ENCODE measurements at regions of chr3 and their contacts with region 1.

Region 1: GRCh38 chr3:148718982-148719862 is 21.5 kb downstream of the AGTR1 start:
- DNase-seq: no peak
- H3K4me3 ChIP-seq: no peak overlapping the region
- H3K4me3 Mint-ChIP-seq: no peak overlapping the region
- H3K27ac Mint-ChIP-seq: no peak overlapping the region
- H3K4me1 ChIP-seq: no peaks in the 10 kb centered on the region
- H3K4me1 Mint-ChIP-seq: no peaks in the 10 kb centered on the region
- H3K27me3 ChIP-seq: no peaks in the 10 kb centered on the region
- H3K27me3 Mint-ChIP-seq: no peaks in the 10 kb centered on the region
- CTCF ChIP-seq: peak; percentile 36 to 62

Region 2: GRCh38 chr3:148450819-148451218 is 268.4 kb before region 1 on chr3:
- CTCF ChIA-PET with region 1: no interaction called
- POLR2A ChIA-PET with region 1: no interaction called
- intact Hi-C with region 1: no loop called
- DNase-seq: peak in 1 of 2 experiments; percentile 29
- H3K4me3 ChIP-seq: no peak overlapping the region
- H3K4me3 Mint-ChIP-seq: no peak overlapping the region
- H3K27ac Mint-ChIP-seq: no peak overlapping the region
- H3K4me1 ChIP-seq: peaks cover 10% of the 10 kb centered on the region
- H3K4me1 Mint-ChIP-seq: peaks cover 16% of the 10 kb centered on the region
- H3K27me3 ChIP-seq: no peaks in the 10 kb centered on the region
- H3K27me3 Mint-ChIP-seq: no peaks in the 10 kb centered on the region
- CTCF ChIP-seq: no peak

Region 3: DNA sequence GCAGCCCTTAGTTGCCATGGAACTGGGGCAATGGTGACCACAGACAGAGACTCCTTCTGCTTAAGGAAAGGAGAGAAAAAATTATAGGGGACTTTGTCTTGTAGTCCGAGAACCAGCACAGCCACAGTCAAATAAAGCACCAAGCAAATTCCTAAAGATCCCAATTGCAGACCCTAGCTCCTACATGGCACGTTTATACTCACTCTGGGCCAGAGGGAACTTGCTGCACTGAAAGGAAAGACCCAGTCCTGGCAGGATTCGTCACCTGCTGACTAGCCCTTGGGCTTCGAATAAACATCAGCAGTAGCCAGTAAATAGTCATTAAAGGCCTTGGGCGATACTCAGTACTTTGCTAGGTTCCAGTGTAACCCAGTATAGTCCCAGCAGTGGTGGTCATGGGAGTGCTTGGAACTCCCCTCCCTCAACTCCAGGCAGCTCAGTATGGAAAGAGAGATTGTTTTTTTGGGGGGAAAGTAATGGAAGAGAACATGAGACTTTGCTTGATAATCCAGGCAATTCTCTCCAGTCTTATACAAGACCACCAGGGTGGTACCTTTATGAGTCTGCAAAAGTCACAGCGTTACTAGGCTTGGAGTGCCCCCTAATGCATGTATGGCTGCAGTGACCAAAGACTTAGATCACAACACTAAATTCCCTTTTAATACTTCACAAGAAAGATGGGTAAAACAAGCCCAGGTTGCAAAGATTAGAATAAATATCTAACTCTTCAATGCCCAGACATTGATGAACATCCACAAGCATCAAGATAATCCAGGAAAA is 87.9 kb before region 1 on chr3:
- CTCF ChIA-PET with region 1: no interaction called
- POLR2A ChIA-PET with region 1: no interaction called
- intact Hi-C with region 1: loop called (anchors 2 kb)
- DNase-seq: peak in 1 of 2 experiments; percentile 41
- H3K4me3 ChIP-seq: no peak overlapping the region
- H3K4me3 Mint-ChIP-seq: no peak overlapping the region
- H3K27ac Mint-ChIP-seq: no peak overlapping the region
- H3K4me1 ChIP-seq: peaks cover 7% of the 10 kb centered on the region; the same call in 1 of the 2 replicates
- H3K4me1 Mint-ChIP-seq: peaks cover 7% of the 10 kb centered on the region
- H3K27me3 ChIP-seq: no peaks in the 10 kb centered on the region
- H3K27me3 Mint-ChIP-seq: no peaks in the 10 kb centered on the region
- CTCF ChIP-seq: peak; percentile 57 to 58

Region 4: GRCh38 chr3:148757238-148758215 is 38.3 kb after region 1 on chr3:
- CTCF ChIA-PET with region 1: no interaction called
- POLR2A ChIA-PET with region 1: no interaction called
- intact Hi-C with region 1: no loop called
- DNase-seq: no peak
- H3K4me3 ChIP-seq: no peak overlapping the region
- H3K4me3 Mint-ChIP-seq: no peak overlapping the region
- H3K27ac Mint-ChIP-seq: no peak overlapping the region
- H3K4me1 ChIP-seq: no peaks in the 10 kb centered on the region
- H3K4me1 Mint-ChIP-seq: peaks cover 7% of the 10 kb centered on the region
- H3K27me3 ChIP-seq: no peaks in the 10 kb centered on the region
- H3K27me3 Mint-ChIP-seq: peaks cover 5% of the 10 kb centered on the region
- CTCF ChIP-seq: no peak

Measured in Caco-2 (cell line).